CD8-positive, alpha-beta T cell (primary cell): ENCODE measurements at regions of chr3 and their contacts with region 1.

Region 1: GRCh38 chr3:27659279-27660021 is 62.7 kb downstream of the EOMES start:
- DNase-seq: peak in 8 of 9 experiments; percentile 23 to 69 (median 46)
- ATAC-seq: peak; percentile 70
- H3K4me3 ChIP-seq: no peak overlapping the region
- H3K4me3 Mint-ChIP-seq: no peak overlapping the region
- H3K27ac ChIP-seq: no peak overlapping the region
- H3K27ac Mint-ChIP-seq: no peak overlapping the region
- H3K4me1 ChIP-seq: no peaks in the 10 kb centered on the region
- H3K4me1 Mint-ChIP-seq: no peaks in the 10 kb centered on the region
- H3K27me3 ChIP-seq: no peaks in the 10 kb centered on the region
- H3K27me3 Mint-ChIP-seq: peaks cover 2% of the 10 kb centered on the region
- CTCF ChIP-seq: peak; percentile 91

Region 2: DNA sequence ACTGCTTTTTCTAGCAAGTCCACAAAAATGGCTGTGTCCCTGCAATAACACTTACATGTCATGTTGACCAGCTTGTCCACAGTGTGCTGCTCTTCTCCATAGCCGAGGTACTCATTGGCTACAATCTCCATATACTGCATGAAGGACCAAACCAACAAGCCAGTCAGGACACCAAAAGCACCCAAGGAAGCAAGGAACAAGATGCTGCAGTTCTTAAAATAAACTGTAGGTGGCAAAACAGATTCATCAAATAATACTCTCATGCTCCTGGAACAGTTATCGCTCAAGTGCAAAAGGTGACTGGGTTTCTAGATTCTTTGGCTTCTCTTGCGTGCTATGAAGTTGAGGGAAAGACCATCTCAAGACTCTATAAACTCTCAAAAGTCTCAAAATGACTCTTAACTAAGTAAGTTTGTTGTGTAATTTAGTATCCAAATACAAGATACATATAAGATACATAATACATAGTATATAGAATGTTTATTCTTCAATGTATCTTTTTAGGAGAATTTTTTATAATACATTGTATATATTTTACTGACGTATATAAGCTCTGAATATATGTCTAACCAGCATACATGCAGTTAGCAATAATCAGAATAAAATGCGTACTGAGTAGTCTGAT is 347.3 kb before region 1 on chr3:
- CTCF ChIA-PET with region 1: interaction called, 7 read pairs
- POLR2A ChIA-PET with region 1: no interaction called
- intact Hi-C with region 1: loop called (anchors 1 to 5 kb)
- DNase-seq: peak in 2 of 9 experiments; percentile 65 to 68
- ATAC-seq: peak; percentile 73
- H3K4me3 ChIP-seq: no peak overlapping the region
- H3K4me3 Mint-ChIP-seq: no peak overlapping the region
- H3K27ac ChIP-seq: no peak overlapping the region
- H3K27ac Mint-ChIP-seq: no peak overlapping the region
- H3K4me1 ChIP-seq: no peaks in the 10 kb centered on the region
- H3K4me1 Mint-ChIP-seq: peaks cover 2% of the 10 kb centered on the region
- H3K27me3 ChIP-seq: no peaks in the 10 kb centered on the region
- H3K27me3 Mint-ChIP-seq: peaks cover 2% of the 10 kb centered on the region
- CTCF ChIP-seq: peak; percentile 68

Region 3: DNA sequence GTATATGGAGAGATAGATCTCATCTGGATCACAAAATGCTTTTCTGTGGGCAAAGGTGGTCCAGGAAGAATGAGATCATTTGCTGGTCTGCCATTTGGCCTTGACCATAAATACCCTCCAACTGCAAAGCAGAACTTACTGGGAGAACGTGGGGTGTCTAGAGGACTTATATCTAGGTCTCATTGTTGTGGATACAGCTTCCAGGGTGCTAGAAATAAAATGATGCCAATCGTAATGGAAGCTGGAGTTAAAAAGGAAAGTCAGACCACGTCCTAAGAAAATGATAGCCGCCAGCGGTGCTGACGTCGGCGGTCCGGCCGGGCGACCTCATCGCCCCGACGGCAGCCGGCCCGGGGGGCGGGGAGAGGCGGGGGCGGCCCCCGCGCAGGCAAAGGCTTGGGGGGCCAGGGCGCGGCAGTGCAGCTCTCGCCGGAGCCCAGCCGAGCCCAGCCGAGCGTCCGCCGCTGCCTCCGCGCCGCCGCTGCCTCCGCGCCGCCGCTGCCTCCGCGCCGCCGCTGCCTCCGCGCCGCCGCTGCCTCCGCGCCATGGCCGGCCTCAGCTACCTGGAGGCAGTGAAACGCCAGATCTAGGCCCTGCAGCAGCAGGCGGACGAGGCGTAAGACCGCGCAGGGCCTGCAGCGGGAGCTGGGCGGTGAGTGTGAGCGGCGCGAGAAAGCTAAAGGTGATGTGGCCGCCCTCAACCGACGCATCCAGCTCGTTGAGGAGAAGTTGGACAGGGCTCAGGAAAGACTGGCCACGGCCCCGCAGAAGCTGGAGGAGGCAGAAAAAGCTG is 26.8 kb before region 1 on chr3:
- CTCF ChIA-PET with region 1: interaction called, 3 read pairs
- POLR2A ChIA-PET with region 1: no interaction called
- intact Hi-C with region 1: loop called in 1 of 2 experiments (anchors 2 kb)
- DNase-seq: peak; percentile 12 to 75 (median 47)
- ATAC-seq: peak; percentile 81
- H3K4me3 ChIP-seq: peak overlapping the region; percentile 65 to 71
- H3K4me3 Mint-ChIP-seq: peak overlapping the region; percentile 95
- H3K27ac ChIP-seq: peak overlapping the region; percentile 54 to 73
- H3K27ac Mint-ChIP-seq: peak overlapping the region; percentile 92
- H3K4me1 ChIP-seq: peaks cover 20% of the 10 kb centered on the region
- H3K4me1 Mint-ChIP-seq: peaks cover 27% of the 10 kb centered on the region
- H3K27me3 ChIP-seq: no peaks in the 10 kb centered on the region
- H3K27me3 Mint-ChIP-seq: no peaks in the 10 kb centered on the region
- CTCF ChIP-seq: no peak

Region 4: GRCh38 chr3:28279770-28280169 is 620.3 kb after region 1 on chr3:
- CTCF ChIA-PET with region 1: no interaction called
- POLR2A ChIA-PET with region 1: no interaction called
- intact Hi-C with region 1: no loop called
- DNase-seq: no peak
- ATAC-seq: no peak
- H3K4me3 ChIP-seq: no peak overlapping the region
- H3K4me3 Mint-ChIP-seq: no peak overlapping the region
- H3K27ac ChIP-seq: no peak overlapping the region
- H3K27ac Mint-ChIP-seq: no peak overlapping the region
- H3K4me1 ChIP-seq: no peaks in the 10 kb centered on the region
- H3K4me1 Mint-ChIP-seq: peaks cover 23% of the 10 kb centered on the region
- H3K27me3 ChIP-seq: no peaks in the 10 kb centered on the region
- H3K27me3 Mint-ChIP-seq: no peaks in the 10 kb centered on the region
- CTCF ChIP-seq: no peak